Right ventricle myocardium inferior (tissue), 1 donor: ENCODE measurements at regions of chr18 and their contacts with region 1.

Region 1: DNA sequence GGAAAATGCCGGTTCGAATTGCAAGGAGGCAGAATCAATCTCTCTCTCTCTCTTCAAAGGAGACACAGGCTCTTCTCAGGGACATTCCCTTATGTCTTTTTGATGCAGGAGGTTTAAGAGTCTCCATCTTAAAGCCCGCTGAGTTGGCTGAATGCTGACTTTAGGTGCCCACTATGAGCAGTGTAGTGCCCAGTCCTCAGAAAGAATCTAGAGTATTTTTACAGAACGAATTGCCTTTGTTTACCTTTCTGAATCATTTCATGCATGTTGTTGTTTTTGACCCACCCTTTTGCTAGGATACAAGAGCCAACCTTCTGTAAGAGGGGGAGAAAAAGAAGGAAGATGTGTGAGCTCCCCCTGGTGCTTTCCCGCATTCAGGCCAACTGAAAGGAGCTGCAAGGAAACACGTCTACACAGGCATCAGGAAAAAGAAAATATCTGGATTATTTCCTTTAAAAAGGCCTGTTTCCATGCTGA is 193.5 kb upstream of the TCF4 start:
- DNase-seq: peak; percentile 50
- ATAC-seq: peak; percentile 57

Region 2: DNA sequence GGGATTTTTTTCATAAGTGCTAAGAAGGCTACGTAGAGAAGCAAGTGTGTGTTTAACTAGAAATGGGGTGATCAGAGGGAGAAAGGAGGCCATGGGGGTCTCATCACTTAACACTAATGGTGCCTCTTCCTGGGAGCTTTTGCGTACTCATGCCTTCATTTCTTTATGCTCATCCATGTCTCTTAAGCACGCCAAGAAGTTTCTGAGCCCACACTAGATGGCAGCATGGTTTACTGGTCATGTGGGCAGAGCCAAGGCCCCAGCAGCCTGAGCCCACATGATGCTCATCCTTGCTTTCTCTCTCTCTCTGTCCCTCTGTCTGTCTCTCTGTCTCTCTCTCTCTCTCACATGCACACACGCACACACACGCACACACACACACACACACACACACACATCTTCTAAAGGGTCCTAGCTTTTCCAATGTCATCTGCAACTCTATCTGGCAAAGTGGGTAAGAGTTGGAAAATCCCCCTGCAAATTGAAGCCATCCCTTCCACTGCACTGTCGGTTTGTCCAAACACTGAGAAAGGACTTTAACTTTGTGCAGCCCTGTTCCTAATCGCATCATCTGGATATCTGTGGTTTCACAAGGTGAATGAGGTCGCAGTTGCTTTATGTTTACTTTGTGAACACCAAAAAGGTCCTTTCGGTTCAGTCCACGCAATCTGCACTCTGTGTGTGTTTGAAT is 685.1 kb before region 1 on chr18:
- intact Hi-C with region 1: loop called (anchors 10 kb)
- DNase-seq: no peak
- ATAC-seq: peak; percentile 77

Region 3: GRCh38 chr18:55343396-55344073 is 438.0 kb before region 1 on chr18:
- intact Hi-C with region 1: loop called (anchors 2 kb)
- DNase-seq: no peak
- ATAC-seq: peak; percentile 44

Region 4: GRCh38 chr18:55422456-55423180 is 358.9 kb before region 1 on chr18:
- intact Hi-C with region 1: loop called (anchors 2 kb)
- DNase-seq: no peak
- ATAC-seq: peak; percentile 63

Region 5: DNA sequence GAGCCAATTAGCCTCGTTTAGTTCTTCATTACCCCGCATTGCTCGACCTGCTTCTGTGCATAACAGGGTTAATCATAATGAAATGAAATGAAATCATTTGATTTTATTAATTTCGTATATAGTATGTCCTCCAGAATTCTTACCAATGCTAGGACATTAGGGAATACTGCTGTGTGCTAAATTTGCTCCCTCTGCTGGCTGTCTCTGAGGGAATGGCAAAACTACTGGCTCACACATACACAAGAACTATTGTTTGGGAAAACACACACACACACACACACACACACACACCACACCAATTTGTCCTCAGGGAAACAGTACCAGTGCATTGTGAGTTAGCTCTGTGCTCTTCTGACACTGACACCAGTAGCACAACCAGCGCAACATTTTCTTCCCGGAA is 79.7 kb after region 1 on chr18:
- intact Hi-C with region 1: loop called (anchors 5 kb)
- DNase-seq: no peak
- ATAC-seq: no peak